ENCODE measurements at regions of chr7 and their contacts with region 1.

Region 1: DNA sequence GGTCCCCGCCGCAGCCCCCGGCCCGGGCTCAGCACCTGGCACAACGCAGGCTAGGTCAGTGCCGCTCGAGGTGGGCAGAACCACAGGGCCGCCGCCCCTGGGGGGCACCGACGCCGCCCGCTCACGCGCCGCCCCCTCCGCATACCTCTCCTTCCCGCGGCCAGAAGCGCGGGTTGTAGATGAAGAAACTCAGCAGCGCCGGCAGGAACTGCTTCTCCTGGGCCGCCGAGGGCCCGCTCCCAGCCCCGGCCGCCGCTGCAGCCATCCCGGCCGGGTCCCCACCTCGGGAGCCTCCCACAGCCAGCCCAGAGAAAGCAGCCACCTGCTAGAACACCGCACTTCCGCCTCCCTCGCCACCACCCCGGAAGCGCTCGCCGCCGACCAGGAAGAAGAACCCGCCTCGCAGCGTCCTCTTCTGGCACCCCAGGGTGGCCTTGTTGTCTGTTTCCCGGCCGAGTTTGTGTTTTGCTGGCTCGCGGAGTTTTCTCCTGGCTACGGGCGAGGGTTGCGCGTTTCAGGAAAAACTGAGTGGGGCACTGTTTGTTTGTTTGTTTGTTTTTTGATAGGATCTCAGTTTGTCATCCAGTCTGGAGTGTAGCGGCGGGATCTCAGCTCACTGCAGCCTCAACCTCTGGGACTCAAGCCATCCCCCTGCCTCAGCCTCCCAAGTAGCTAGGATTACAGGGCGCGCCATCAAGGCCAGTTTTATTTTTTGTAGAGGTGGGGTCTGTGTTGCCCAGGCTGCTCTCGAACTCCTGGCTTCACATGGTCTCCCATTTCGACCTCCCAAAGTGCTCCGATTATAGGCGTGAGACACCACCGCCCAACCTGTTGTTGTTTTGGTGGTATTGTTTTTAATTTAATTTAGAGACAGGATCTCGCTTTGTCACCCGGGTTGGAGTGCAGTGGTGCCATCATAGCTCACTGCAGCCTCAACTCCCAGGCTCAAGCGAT is 17.7 kb downstream of the OCM2 start:
- H3K4me3 ChIP-seq: peak overlapping the region; percentile 95
- H3K27ac ChIP-seq: peak overlapping the region; percentile 68; the same call in 1 of the 2 replicates
- H3K4me1 ChIP-seq: no peaks in the 10 kb centered on the region
- CTCF ChIP-seq: peak; percentile 89

Region 2: DNA sequence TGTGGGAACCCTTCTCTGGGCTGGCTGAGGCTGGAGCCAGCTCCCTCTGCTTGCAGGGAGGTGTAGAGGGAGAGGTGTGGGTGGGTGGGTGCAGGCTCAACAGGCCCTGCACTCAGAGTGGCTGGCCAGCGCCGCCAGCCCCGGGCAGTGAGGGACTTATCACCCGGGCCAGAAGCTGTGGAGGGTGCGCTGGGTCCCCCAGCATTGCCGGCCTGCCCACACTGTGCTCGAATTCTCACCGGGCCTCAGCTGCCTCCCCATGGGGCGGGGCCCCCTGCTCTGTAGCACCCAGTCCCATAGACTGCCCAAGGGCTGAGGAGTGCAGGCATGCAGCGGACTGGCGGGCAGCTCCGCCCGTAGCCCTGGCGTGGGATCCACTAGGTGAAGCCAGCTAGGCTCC is 431.1 kb before region 1 on chr7:
- CTCF ChIA-PET with region 1: no interaction called
- POLR2A ChIA-PET with region 1: no interaction called
- H3K4me3 ChIP-seq: no peak overlapping the region
- H3K27ac ChIP-seq: no peak overlapping the region
- H3K4me1 ChIP-seq: no peaks in the 10 kb centered on the region
- CTCF ChIP-seq: no peak

Region 3: DNA sequence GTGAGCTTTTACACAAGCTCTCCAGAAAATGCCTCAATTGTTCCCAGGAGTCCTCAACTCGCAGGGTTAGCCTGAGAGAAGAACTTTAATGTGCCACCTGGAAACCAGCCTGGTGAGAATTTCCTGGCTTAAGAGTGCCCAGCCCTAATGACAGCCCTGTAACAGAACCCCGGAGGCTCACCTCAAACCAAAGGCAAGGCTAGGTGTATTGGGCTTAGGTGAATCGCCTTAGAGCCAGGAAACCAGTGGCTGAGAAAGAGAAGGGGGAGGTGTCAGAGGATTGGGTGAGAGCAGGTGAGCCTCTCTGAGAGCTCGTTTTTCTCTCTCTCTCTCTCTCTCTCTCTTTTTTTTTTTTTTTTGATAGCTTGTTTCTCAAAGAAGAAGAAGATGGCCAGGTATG is 10.4 kb after region 1 on chr7:
- CTCF ChIA-PET with region 1: interaction called, 3 read pairs
- POLR2A ChIA-PET with region 1: interaction called, 12 read pairs
- H3K4me3 ChIP-seq: no peak overlapping the region
- H3K27ac ChIP-seq: no peak overlapping the region
- H3K4me1 ChIP-seq: no peaks in the 10 kb centered on the region
- CTCF ChIP-seq: no peak

Measured in HEK293 (cell line).